ENCODE measurements at regions of chr9 and their contacts with region 1.

Region 1: DNA sequence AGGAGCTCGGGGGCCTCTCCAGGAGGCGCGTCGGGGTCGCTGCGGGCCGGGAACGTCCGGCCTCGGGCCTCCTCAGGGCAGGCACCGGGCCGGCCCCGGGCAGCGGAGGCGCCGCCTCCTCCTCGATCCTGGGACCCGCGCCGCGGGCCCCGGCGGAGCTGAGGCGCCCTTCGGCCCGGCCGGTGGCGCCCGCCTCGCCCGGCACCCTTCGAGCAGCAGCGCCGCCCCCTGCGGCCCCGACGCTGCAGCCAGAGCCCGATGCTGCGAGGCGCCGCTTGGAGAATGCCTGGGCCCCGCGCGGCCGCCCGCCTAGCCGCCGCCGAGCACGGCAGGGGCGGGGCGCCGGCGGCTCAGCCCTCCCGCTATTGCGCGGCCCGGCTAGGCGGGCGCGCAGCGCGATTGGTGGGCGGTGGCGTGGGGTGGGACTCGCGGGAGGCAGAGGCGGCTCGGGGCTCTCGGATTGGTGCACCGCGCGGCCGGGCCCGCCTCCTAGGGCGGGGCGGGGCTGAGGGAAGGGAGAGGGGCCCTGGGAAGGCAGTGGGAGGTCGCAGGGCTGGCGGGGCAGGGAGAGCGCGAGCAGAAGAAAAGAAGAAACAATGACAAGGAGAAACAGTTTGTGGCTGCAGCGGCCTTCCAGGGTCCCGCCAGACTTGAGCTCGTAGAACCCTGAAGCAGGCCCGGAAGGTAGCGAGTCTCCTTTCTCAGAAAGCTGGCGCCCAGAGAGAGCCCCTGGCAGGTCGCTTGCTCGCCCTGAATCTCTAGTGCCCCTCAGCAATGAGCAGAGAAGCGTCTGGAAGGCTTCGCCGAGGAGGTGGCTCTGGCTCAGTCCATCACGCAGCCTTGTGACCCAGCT is at the start of gene EEIG1:
- DNase-seq: peak; percentile 96 to 98
- H3K4me3 ChIP-seq: peak within 1 kb of the TSS; percentile 87
- H3K4me3 Mint-ChIP-seq: peak within 1 kb of the TSS; percentile 95
- H3K27ac Mint-ChIP-seq: peak within 1 kb of the TSS; percentile 86
- H3K4me1 ChIP-seq: peaks cover 33% of the 10 kb centered on the region
- H3K4me1 Mint-ChIP-seq: peaks cover 16% of the 10 kb centered on the region
- H3K27me3 ChIP-seq: no peaks in the 10 kb centered on the region
- H3K27me3 Mint-ChIP-seq: no peaks in the 10 kb centered on the region
- CTCF ChIP-seq: no peak
- total RNA-seq, gene EEIG1: 44.1 and 47.1 TPM in 2 replicates

Region 2: GRCh38 chr9:127955294-127956035 is 25.5 kb before region 1 on chr9:
- CTCF ChIA-PET with region 1: interaction called, 8 read pairs
- POLR2A ChIA-PET with region 1: interaction called, 7 read pairs
- intact Hi-C with region 1: loop called (anchors 1 kb)
- DNase-seq: peak; percentile 86 to 90
- H3K4me3 ChIP-seq: no peak overlapping the region
- H3K4me3 Mint-ChIP-seq: peak overlapping the region; percentile 58
- H3K27ac Mint-ChIP-seq: peak overlapping the region; percentile 82
- H3K4me1 ChIP-seq: peaks cover 29% of the 10 kb centered on the region
- H3K4me1 Mint-ChIP-seq: peaks cover 12% of the 10 kb centered on the region
- H3K27me3 ChIP-seq: no peaks in the 10 kb centered on the region
- H3K27me3 Mint-ChIP-seq: no peaks in the 10 kb centered on the region
- CTCF ChIP-seq: peak; percentile 64 to 75

Region 3: GRCh38 chr9:127965953-127966352 is 15.0 kb before region 1 on chr9:
- CTCF ChIA-PET with region 1: interaction called, 3 read pairs
- POLR2A ChIA-PET with region 1: no interaction called
- intact Hi-C with region 1: loop called (anchors 1 kb)
- DNase-seq: no peak
- H3K4me3 ChIP-seq: no peak overlapping the region
- H3K4me3 Mint-ChIP-seq: no peak overlapping the region
- H3K27ac Mint-ChIP-seq: peak overlapping the region; percentile 98
- H3K4me1 ChIP-seq: peaks cover 30% of the 10 kb centered on the region
- H3K4me1 Mint-ChIP-seq: peaks cover 12% of the 10 kb centered on the region
- H3K27me3 ChIP-seq: no peaks in the 10 kb centered on the region
- H3K27me3 Mint-ChIP-seq: no peaks in the 10 kb centered on the region
- CTCF ChIP-seq: no peak

Region 4: DNA sequence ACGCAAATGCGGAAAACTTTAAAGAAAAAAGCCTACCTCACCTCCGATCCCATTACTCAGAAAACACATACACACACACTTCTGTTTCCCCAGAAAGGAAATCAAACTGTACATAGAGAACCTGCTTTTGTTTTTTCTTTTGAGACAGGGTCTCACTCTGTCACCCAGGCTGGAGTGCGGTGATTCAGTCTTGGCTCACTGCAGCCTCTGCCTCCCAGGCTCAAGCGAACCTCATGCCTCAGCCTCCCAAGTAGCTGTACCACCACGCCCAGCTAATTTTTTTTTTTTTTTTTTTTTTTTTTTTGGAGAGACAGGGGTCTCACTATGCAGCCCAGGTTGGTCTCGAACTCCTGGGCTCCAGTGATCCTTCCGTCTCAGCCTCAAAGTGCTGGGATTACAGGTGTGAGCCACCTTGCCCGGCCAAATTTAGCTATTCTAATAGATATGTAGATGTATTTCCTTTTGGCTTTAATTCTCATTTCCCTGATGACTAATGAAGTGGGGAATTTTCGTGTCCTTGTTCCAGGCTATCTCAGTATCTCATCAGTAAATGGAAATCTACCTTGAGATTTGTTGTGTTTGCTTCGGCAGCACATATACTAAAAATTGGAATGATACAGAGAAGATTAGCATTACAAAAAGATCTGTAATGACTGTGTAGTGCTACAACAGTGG is 25.6 kb after region 1 on chr9:
- CTCF ChIA-PET with region 1: interaction called, 10 read pairs
- POLR2A ChIA-PET with region 1: no interaction called
- intact Hi-C with region 1: no loop called
- DNase-seq: no peak
- H3K4me3 ChIP-seq: no peak overlapping the region
- H3K4me3 Mint-ChIP-seq: no peak overlapping the region
- H3K27ac Mint-ChIP-seq: no peak overlapping the region
- H3K4me1 ChIP-seq: peaks cover 6% of the 10 kb centered on the region
- H3K4me1 Mint-ChIP-seq: no peaks in the 10 kb centered on the region
- H3K27me3 ChIP-seq: no peaks in the 10 kb centered on the region
- H3K27me3 Mint-ChIP-seq: no peaks in the 10 kb centered on the region
- CTCF ChIP-seq: no peak

Region 5: DNA sequence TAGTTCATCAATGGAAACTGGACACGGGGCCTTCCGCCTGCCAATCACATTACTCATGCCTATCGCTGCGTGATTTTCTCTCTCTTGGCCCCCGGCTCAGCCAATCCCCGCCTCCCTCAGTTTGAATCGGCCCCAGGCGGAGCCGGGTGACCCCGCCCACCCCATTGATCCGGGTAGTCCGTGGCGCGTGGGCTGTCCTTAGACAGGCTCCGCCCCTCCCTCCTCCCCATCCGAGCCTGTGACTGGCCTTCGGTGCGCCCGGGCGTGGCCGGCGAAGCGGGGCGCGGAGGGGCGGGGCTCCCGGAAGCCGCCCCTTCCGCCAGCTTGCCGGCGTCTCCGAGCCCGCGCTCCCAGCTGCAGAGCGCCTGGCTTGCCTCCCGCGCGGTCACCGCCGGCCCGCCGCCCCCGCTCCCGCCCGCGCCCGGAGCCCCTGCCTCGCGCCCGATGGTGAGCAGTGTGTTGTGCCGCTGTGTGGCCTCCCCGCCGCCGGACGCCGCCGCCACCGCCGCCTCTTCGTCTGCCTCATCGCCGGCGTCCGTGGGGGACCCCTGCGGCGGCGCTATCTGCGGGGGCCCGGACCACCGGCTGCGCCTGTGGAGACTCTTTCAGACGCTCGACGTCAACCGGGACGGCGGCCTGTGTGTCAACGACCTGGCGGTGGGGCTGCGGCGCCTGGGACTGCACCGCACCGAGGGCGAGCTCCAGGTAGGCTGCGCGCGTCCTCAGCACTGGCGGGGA is 87.1 kb after region 1 on chr9 and contains the start of gene SLC25A25:
- CTCF ChIA-PET with region 1: interaction called, 6 read pairs
- POLR2A ChIA-PET with region 1: interaction called, 5 read pairs
- intact Hi-C with region 1: loop called (anchors 1 kb)
- DNase-seq: peak; percentile 100
- H3K4me3 ChIP-seq: peak within 1 kb of the TSS; percentile 77
- H3K4me3 Mint-ChIP-seq: no peak within 1 kb of the TSS
- H3K27ac Mint-ChIP-seq: peak within 1 kb of the TSS; percentile 63
- H3K4me1 ChIP-seq: peaks cover 24% of the 10 kb centered on the region
- H3K4me1 Mint-ChIP-seq: peaks cover 19% of the 10 kb centered on the region
- H3K27me3 ChIP-seq: no peaks in the 10 kb centered on the region
- H3K27me3 Mint-ChIP-seq: no peaks in the 10 kb centered on the region
- CTCF ChIP-seq: no peak
- total RNA-seq, gene SLC25A25: 16.5 and 18.5 TPM in 2 replicates

Measured in Caco-2 (cell line).